MCF 10A (cell line): ENCODE measurements at regions of chr2 and their contacts with region 1.

Region 1: DNA sequence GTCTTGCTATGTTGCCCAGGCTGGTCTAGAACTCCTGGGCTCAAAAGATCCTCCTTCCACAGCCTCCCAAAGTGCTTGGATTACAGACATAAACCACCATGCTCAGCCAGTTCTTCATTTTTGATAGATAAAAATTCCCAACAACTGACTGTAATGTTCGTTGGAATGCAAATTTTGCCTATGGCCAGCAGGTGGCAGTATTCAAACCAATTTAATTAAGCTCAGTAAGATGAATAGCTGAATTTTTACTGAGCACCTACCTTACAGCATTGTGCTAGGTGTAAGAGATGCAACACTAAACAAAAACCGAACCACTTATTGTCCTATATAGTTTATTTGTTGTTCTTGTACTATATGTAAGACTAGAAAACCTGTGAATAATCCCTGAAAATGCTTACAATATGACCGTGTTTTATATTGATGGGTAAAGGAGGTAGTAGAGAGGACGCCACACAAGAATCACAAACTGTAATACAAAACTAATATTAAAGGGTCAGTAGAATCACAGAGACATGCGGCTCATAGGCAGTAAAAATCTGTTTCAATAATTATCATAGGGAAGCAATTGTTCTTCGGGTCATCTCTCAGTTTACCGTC is 8.2 kb upstream of the TMEM182 start:
- DNase-seq: peak; percentile 56
- H3K4me3 Mint-ChIP-seq: no peak overlapping the region
- H3K27ac Mint-ChIP-seq: no peak overlapping the region
- H3K4me1 Mint-ChIP-seq: no peaks in the 10 kb centered on the region
- H3K27me3 Mint-ChIP-seq: no peaks in the 10 kb centered on the region
- CTCF ChIP-seq: peak; percentile 64

Region 2: DNA sequence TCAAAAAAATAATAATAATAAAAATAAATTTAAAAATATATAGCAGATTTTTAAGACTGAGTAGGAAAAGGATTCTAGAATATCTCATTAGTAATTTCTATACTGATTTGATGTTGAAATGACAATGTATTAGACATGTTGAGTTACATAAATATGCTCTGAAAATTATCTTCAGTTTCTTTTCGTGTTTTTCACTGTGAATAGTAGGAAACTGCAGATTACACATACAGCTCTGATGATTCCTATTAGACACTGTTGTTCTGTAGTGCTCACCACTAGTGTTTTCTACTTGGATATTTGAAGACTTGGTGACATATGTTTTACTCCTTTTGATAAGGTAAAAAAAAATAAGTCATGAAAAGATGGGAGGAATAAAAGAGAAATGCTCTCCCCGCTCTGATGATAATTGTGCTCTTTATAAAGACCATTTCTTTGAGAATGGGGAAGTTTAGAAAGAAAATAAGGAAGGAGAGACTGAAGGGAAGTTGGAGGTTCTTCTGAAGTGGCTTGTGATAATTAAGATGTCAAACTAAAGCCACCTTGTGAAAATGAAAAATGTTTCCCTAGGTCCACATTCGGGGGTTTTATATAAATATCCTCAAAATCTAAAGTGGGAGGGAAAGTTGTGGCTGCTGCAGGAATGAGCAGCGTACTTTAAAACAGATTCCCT is 81.4 kb before region 1 on chr2:
- CTCF ChIA-PET with region 1: no interaction called
- POLR2A ChIA-PET with region 1: no interaction called
- intact Hi-C with region 1: no loop called
- DNase-seq: no peak
- H3K4me3 Mint-ChIP-seq: no peak overlapping the region
- H3K27ac Mint-ChIP-seq: no peak overlapping the region
- H3K4me1 Mint-ChIP-seq: no peaks in the 10 kb centered on the region
- H3K27me3 Mint-ChIP-seq: no peaks in the 10 kb centered on the region
- CTCF ChIP-seq: no peak

Region 3: GRCh38 chr2:102686479-102687439 is 66.9 kb before region 1 on chr2:
- CTCF ChIA-PET with region 1: no interaction called
- POLR2A ChIA-PET with region 1: no interaction called
- intact Hi-C with region 1: no loop called
- DNase-seq: no peak
- H3K4me3 Mint-ChIP-seq: no peak overlapping the region
- H3K27ac Mint-ChIP-seq: no peak overlapping the region
- H3K4me1 Mint-ChIP-seq: no peaks in the 10 kb centered on the region
- H3K27me3 Mint-ChIP-seq: no peaks in the 10 kb centered on the region
- CTCF ChIP-seq: no peak

Region 4: GRCh38 chr2:102736410-102737409 is 17.0 kb before region 1 on chr2:
- CTCF ChIA-PET with region 1: interaction called, 36 read pairs
- POLR2A ChIA-PET with region 1: interaction called, 3 read pairs
- intact Hi-C with region 1: no loop called
- DNase-seq: peak; percentile 74
- H3K4me3 Mint-ChIP-seq: peak overlapping the region; percentile 89
- H3K27ac Mint-ChIP-seq: peak overlapping the region; percentile 43
- H3K4me1 Mint-ChIP-seq: peaks cover 14% of the 10 kb centered on the region
- H3K27me3 Mint-ChIP-seq: no peaks in the 10 kb centered on the region
- CTCF ChIP-seq: no peak

Region 5: GRCh38 chr2:102773149-102773705 is 19.6 kb after region 1 on chr2:
- CTCF ChIA-PET with region 1: interaction called, 19 read pairs
- POLR2A ChIA-PET with region 1: no interaction called
- intact Hi-C with region 1: no loop called
- DNase-seq: no peak
- H3K4me3 Mint-ChIP-seq: no peak overlapping the region
- H3K27ac Mint-ChIP-seq: no peak overlapping the region
- H3K4me1 Mint-ChIP-seq: no peaks in the 10 kb centered on the region
- H3K27me3 Mint-ChIP-seq: no peaks in the 10 kb centered on the region
- CTCF ChIP-seq: no peak

Region 6: GRCh38 chr2:102782933-102783332 is 29.3 kb after region 1 on chr2:
- CTCF ChIA-PET with region 1: interaction called, 23 read pairs
- POLR2A ChIA-PET with region 1: interaction called, 3 read pairs
- intact Hi-C with region 1: no loop called
- DNase-seq: no peak
- H3K4me3 Mint-ChIP-seq: no peak overlapping the region
- H3K27ac Mint-ChIP-seq: no peak overlapping the region
- H3K4me1 Mint-ChIP-seq: no peaks in the 10 kb centered on the region
- H3K27me3 Mint-ChIP-seq: no peaks in the 10 kb centered on the region
- CTCF ChIP-seq: no peak

Region 7: GRCh38 chr2:102796337-102796736 is 42.7 kb after region 1 on chr2:
- CTCF ChIA-PET with region 1: interaction called, 96 read pairs
- POLR2A ChIA-PET with region 1: interaction called, 3 read pairs
- intact Hi-C with region 1: no loop called
- DNase-seq: no peak
- H3K4me3 Mint-ChIP-seq: no peak overlapping the region
- H3K27ac Mint-ChIP-seq: no peak overlapping the region
- H3K4me1 Mint-ChIP-seq: no peaks in the 10 kb centered on the region
- H3K27me3 Mint-ChIP-seq: no peaks in the 10 kb centered on the region
- CTCF ChIP-seq: no peak